Thyroid gland (tissue), 4 donors: ENCODE measurements at regions of chr11 and their contacts with region 1.

Region 1: DNA sequence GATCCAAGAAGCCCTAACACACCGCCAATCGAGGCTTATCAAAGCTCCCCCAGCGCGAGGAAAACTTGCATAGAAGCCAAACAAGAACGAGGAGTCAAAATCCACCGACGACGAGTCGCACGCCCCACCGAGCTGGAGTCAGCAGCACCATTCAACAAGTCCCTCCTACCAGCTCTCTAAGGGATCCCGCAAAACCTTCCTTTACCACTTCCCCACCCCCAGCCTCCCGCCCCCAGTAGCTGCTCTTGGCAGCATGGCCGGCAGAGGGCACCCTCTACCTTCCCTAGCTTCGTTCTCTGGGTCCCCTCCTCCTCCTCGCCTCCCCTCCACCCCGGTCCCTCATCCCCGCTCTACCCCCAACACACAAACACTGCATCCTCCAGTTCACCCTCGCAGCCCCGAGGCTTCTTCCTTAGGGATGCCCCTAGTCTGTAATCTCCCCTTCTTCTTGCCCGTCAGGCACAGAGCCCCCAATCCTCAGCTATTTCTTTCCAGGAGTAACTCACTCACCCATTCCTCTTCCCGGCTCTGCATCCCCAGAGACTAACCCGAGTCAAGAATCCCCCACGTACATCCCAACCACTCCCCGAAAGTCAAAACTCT is 1.3 kb downstream of the BDNF start:
- DNase-seq: peak; percentile 85 to 88
- H3K4me3 ChIP-seq: peak overlapping the region; percentile 17 to 67 (median 46)
- H3K27ac ChIP-seq: no peak overlapping the region
- H3K4me1 ChIP-seq: peaks cover 0 to 13% of the 10 kb centered on the region in 2 donors
- H3K27me3 ChIP-seq: no peaks in the 10 kb centered on the region
- CTCF ChIP-seq: peak; percentile 45 to 92 (median 55)
- POLR2A ChIP-seq: no peak

Region 2: DNA sequence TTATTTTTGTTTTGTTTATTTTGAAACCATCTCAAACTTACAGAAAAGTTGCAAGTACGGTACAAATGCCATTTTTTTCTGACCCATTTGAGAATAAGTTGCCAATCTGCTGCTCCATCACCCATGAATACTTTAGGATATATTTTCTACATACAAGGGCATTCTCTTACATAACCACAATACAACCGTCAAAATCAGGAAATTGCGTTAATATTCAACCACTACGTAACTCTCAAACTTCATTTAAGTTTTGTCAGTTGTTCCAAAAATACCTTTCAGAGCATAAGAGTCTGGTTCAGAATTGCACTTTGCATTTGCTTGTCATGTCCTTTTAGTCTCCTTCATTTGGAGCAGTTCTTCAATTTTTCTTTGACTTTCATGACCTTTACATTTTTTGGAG is 195.6 kb after region 1 on chr11:
- intact Hi-C with region 1: no loop called
- DNase-seq: no peak
- H3K4me3 ChIP-seq: no peak overlapping the region
- H3K27ac ChIP-seq: no peak overlapping the region
- H3K4me1 ChIP-seq: no peaks in the 10 kb centered on the region
- H3K27me3 ChIP-seq: no peaks in the 10 kb centered on the region
- CTCF ChIP-seq: no peak
- POLR2A ChIP-seq: no peak

Region 3: DNA sequence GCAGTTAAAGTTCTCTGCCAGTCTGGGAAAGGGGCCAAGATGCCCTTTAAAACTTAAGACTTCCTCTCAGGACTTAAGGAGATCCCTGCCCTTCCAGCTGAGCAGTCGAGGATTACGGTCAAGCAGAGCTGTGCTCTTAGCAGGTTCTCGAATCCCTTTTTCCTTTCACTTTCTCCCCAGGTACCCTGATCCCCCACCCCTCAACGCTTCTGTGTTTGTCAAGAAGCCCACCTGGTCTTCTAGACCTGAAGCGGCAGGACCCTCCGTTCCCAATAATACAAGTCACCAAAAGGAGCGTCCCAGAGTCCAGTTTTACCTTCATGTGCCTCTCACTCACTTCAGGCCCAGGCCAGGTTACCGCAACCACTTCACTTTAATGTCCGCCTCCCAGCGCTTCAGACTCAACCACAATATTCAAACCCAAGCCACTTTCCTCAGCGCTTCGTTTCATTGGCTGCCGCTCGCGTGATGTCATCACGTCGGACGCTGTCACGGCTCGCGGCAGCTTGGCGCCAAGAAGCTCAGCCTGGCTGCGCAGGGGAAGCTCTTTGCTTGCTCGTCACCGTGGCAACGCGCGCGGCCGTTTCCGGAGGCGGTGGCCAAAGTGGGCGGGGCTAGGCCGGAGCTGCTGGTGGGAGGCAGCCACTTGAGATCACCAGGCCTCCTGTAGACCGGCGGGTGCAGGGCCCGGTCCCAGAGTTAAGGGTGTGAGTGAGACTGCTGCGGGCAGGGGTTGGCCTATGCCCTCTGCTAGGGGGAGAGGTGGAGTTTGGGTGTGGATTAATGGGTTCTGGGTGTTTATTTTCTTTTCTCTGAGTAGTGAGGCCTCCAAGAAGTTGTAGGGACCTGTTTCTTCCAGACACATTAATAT is 409.0 kb after region 1 on chr11 and contains the starts of genes KIF18A and METTL15:
- intact Hi-C with region 1: loop called (anchors 10 kb)
- DNase-seq: peak; percentile 100
- H3K4me3 ChIP-seq: peak within 1 kb of the TSS; percentile 7 to 36 (median 32)
- H3K27ac ChIP-seq: peak within 1 kb of the TSS; percentile 82 to 88 (median 82)
- H3K4me1 ChIP-seq: peaks cover 12 to 21% of the 10 kb centered on the region in 2 donors
- H3K27me3 ChIP-seq: no peaks in the 10 kb centered on the region
- CTCF ChIP-seq: no peak
- POLR2A ChIP-seq: peak in 1 of 2 donors; percentile 85
- total RNA-seq, gene KIF18A: 2.3 to 4.6 (median 4.1) TPM
- total RNA-seq, gene METTL15: 13.3 to 40.2 (median 23.4) TPM

Region 4: DNA sequence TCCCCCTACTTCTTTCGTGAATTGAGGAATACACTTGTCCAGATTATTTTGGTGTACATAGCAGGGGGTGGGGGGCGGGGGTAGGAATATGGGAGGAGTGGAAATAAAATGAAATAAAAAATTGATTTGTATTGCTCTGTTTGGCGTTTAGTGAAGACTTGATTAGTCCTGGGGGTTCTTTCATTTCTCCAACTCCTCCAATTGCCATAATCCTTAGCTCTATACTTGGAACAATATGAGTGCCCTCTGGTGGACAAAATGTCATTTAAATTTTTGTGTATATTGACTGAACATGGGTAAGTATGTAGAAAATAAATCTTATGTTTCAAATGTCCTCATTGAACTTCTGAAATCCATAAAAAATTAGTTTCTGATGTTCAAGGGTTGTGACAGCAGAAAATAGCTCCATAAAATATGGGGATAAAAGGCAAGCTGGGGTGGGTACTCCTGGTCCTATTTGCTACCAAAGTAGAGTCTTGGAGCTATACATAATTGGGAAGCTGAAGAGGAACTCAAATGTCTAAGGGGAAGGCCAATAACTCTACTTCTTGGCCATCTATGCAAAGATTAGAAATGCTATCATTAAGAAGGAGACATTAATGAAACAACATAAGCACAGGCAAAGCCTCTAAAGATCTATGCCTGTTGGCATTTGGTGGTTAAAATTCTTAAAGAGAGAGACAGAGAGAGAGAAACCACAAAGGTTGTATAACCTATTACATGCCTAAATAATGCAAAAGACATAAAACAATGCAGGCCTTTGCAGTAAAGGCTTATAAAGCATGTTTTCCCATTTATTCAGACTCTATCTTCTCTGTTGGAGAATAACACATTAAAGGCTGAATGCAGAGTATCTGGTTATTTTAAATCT is 830.8 kb after region 1 on chr11:
- intact Hi-C with region 1: loop called (anchors 5 kb)
- DNase-seq: no peak
- H3K4me3 ChIP-seq: no peak overlapping the region
- H3K27ac ChIP-seq: no peak overlapping the region
- H3K4me1 ChIP-seq: peaks cover 0 to 7% of the 10 kb centered on the region in 2 donors
- H3K27me3 ChIP-seq: no peaks in the 10 kb centered on the region
- CTCF ChIP-seq: peak in 4 of 6 experiments; percentile 21 to 52 (median 52)
- POLR2A ChIP-seq: no peak